Colonic mucosa (tissue), 4 donors: ENCODE measurements at regions of chr9 and their contacts with region 1.

Region 1: DNA sequence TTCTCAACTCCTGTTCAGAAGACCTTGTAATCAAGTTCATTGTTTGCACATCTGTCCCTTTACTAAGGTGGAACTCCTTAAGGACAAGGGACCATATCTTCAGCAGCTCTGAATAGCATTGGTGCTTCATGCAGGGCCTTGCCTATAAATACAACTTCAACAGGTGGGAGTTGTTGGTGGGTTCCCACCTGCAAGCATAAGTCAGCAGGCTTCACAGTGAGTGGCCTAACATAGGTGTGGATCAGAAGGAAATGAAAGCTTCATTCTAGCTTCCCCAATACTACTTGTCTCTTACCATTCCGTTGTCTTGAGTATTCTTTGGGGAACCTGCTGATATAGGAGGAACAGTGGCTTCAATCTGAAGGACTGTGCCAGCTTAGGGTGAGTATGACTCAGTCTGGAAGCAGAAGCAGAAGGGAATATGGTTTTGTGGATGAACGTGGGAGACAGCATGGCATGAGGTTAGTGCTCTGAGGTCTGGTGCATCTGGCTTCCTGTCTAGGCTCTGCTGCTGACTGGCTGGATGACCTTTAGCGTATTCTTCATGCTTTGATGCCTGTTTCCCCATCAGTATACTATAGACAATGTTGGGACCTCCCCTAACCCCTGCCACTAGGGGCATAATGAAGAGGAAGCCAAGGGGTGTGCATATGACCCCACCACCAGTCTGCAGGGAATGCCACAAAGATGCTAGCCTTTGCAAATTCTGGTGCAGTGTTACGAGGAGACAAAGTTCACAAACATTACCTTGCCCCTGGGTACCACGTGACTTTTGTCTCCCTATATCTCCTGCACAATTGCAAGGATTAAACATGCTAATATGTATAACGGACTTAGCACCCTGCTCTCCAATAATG is 192.3 kb downstream of the PALM2AKAP2 start:
- DNase-seq: no peak
- H3K4me3 ChIP-seq: no peak overlapping the region
- H3K27ac ChIP-seq: no peak overlapping the region
- H3K4me1 ChIP-seq: no peaks in the 10 kb centered on the region
- H3K27me3 ChIP-seq: no peaks in the 10 kb centered on the region
- CTCF ChIP-seq: no peak

Region 2: GRCh38 chr9:110029429-110029955 is 57.2 kb after region 1 on chr9:
- intact Hi-C with region 1: loop called (anchors 5 kb)
- DNase-seq: no peak
- H3K4me3 ChIP-seq: no peak overlapping the region
- H3K27ac ChIP-seq: no peak overlapping the region
- H3K4me1 ChIP-seq: no peaks in the 10 kb centered on the region
- H3K27me3 ChIP-seq: no peaks in the 10 kb centered on the region
- CTCF ChIP-seq: no peak